ENCODE measurements at regions of chr11 and their contacts with region 1.

Region 1: DNA sequence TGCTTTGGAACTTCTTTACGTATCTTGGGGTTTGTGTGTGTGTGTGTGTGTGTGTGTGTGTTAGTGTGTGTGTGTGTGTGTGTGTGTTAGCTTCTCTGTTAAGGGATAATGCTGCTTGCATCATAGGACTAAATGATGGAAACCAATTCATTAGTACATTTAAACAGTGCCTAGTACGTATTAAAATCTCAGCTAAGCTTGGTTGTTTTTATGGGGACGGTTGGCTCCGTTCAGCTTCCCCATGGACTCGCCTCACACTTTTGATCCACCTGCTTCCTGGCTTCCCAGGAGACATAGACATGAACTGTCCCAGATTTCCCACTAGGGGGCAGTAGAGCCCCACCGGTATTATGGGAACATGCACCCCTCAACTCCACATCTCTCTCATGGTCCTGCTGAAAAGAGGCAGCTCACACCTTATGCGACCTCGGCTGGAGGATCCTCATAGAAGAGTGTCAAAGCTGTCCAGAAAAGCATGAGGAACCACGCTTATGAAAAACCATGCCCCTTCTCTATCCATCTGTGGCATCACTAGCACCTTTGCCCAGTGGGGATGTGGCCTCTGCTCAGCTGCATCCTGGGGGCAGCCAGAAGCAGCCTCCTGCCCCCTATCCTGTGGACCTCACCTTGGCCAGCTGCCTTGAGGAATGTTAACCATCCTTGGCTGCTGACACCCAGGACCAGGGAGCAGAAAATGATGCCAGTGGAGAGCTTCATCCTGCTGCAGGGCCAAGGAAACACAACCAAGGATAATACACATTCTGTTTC is 9.7 kb upstream of the SAAL1 start:
- DNase-seq: peak; percentile 70
- H3K4me3 Mint-ChIP-seq: no peak overlapping the region
- H3K27ac Mint-ChIP-seq: no peak overlapping the region
- H3K4me1 Mint-ChIP-seq: no peaks in the 10 kb centered on the region
- H3K27me3 Mint-ChIP-seq: peaks cover 10% of the 10 kb centered on the region

Region 2: DNA sequence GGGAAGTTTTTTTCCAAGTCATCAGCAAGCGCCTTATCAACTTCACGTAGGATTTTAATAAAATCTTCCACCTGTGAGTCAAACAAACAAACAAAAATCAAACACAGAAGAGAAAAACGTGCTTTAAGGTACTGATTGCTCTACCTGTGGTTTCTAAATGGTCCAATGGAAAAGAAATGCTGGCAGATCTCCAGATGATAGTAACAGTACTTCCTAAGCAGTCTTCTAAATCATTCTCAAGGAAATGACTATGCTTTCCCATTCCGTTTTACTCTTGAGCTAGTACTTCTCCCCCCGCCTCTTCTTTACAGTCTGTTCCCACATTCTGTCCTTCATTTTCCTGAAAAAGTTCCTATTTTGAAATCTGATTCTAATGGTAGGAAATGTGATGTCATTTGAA is 35.1 kb before region 1 on chr11:
- CTCF ChIA-PET with region 1: no interaction called
- POLR2A ChIA-PET with region 1: no interaction called
- intact Hi-C with region 1: no loop called
- DNase-seq: no peak
- H3K4me3 Mint-ChIP-seq: no peak overlapping the region
- H3K27ac Mint-ChIP-seq: no peak overlapping the region
- H3K4me1 Mint-ChIP-seq: no peaks in the 10 kb centered on the region
- H3K27me3 Mint-ChIP-seq: no peaks in the 10 kb centered on the region

Region 3: DNA sequence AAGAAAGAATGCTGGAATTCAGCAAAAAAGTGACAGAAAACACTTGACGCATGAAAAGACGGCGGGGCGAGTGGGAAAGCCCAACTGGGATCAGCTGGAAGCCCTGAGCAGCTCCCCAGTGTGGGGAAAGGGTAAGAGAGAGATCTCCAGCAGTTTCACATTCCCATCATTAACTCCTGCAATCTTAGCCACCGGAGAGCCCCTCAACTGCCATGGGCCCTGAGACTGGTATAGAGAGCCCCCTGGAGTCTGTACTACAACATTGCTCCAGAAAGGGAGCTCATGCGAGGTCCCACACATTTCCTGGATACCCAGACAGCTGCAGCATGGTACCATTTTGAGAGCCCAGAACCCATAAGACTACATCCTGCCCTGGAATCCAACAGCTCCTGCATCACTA is 88.2 kb after region 1 on chr11:
- CTCF ChIA-PET with region 1: interaction called, 25 read pairs
- POLR2A ChIA-PET with region 1: no interaction called
- intact Hi-C with region 1: loop called (anchors 10 kb)
- DNase-seq: no peak
- H3K4me3 Mint-ChIP-seq: no peak overlapping the region
- H3K27ac Mint-ChIP-seq: no peak overlapping the region
- H3K4me1 Mint-ChIP-seq: no peaks in the 10 kb centered on the region
- H3K27me3 Mint-ChIP-seq: peaks cover 38% of the 10 kb centered on the region

Region 4: GRCh38 chr11:18802381-18803257 is 687.1 kb after region 1 on chr11:
- CTCF ChIA-PET with region 1: interaction called, 4 read pairs
- POLR2A ChIA-PET with region 1: no interaction called
- intact Hi-C with region 1: loop called (anchors 5 kb)
- DNase-seq: peak; percentile 50
- H3K4me3 Mint-ChIP-seq: no peak overlapping the region
- H3K27ac Mint-ChIP-seq: no peak overlapping the region
- H3K4me1 Mint-ChIP-seq: no peaks in the 10 kb centered on the region
- H3K27me3 Mint-ChIP-seq: peaks cover 7% of the 10 kb centered on the region

Measured in activated CD4-positive, alpha-beta memory T cell treated with anti-CD3 and anti-CD28 coated beads for 36 hours (primary cell).